ENCODE measurements at regions of chr2 and their contacts with region 1.

Region 1: GRCh38 chr2:41414486-41415230 is 633.2 kb upstream of the PKDCC start:
- DNase-seq: no peak
- ATAC-seq: no peak

Region 2: GRCh38 chr2:41137036-41137435 is 277.6 kb before region 1 on chr2:
- intact Hi-C with region 1: no loop called
- DNase-seq: no peak
- ATAC-seq: no peak

Region 3: DNA sequence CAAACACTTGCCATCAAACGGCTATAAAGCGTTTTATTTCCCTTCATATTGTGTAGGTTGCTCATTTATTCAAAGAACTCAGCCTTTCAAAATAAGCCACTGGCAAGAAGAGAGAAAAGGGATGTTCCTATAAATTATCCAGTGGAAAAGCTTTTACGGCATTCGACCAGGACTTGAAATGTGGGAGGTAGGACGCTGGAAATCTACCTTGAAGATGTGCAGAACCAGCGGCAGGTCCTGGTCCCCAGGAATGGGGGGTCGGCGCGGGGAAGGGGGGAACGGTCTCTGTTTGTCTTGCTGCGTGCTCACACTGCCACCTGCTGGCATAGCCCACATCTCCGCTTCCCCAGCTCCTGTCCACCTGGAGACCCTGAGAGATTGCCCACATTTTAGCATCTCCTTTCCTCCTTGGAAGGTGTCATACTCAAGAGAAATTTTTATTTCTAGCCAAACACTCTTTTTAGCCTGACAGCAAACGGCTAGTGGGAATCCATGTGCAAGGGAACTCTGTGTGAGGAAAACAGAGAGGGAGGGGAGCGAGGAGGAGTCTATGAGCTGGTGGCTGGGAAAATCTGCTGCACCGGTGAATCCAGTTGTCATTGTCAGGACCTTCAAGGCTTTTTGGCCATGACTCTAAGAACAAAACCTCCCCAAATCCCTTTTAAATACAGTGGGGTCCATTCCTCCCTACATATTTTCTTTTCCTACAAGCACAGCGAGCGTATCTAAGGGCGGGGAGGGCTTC is 284.2 kb after region 1 on chr2:
- intact Hi-C with region 1: loop called (anchors 5 to 10 kb)
- DNase-seq: peak; percentile 49
- ATAC-seq: peak; percentile 41 to 65

Region 4: GRCh38 chr2:41782306-41783158 is 367.9 kb after region 1 on chr2:
- intact Hi-C with region 1: loop called in 1 of 2 experiments (anchors 10 kb)
- DNase-seq: no peak
- ATAC-seq: peak in 1 of 2 donors; percentile 23

Region 5: GRCh38 chr2:42486145-42486906 is 1071.7 kb after region 1 on chr2:
- intact Hi-C with region 1: no loop called
- DNase-seq: no peak
- ATAC-seq: no peak